Uterus (tissue), 4 donors: ENCODE measurements at regions of chr2 and their contacts with region 1.

Region 1: DNA sequence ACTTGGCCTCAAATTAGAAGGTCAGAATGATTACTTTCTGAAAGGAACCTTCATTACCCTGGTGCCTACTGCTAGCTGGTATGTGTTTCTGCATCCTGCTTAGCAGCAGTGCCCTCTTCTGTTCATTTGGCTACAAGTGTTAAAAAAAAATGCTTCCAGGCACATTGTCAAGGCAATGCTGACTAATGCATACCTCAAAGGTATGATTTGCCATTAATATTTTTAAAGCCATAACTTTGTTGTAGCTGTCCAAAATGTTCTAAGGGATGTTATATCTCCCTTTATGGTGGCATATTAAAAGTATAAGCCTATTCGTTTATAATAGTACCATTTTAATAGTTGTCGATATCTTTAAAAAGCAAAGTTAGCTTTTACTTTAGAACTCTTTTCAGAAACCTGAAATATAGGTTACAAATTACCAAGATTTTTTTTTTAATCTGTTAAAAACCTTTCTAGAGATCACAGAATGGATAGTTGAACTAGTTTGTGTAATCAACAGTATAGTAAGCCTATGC is 52.0 kb upstream of the FAM171B start:
- DNase-seq: peak in 1 of 2 donors; percentile 28
- H3K4me3 ChIP-seq: no peak overlapping the region
- H3K27ac ChIP-seq: no peak overlapping the region
- H3K4me1 ChIP-seq: no peaks in the 10 kb centered on the region
- H3K27me3 ChIP-seq: no peaks in the 10 kb centered on the region
- CTCF ChIP-seq: peak; percentile 74 to 83 (median 79)
- POLR2A ChIP-seq: no peak

Region 2: GRCh38 chr2:186493564-186494085 is 148.2 kb before region 1 on chr2:
- intact Hi-C with region 1: no loop called
- DNase-seq: no peak
- H3K4me3 ChIP-seq: no peak overlapping the region
- H3K27ac ChIP-seq: no peak overlapping the region
- H3K4me1 ChIP-seq: peaks cover 2 to 19% of the 10 kb centered on the region in 2 donors
- H3K27me3 ChIP-seq: no peaks in the 10 kb centered on the region
- CTCF ChIP-seq: no peak
- POLR2A ChIP-seq: no peak

Region 3: DNA sequence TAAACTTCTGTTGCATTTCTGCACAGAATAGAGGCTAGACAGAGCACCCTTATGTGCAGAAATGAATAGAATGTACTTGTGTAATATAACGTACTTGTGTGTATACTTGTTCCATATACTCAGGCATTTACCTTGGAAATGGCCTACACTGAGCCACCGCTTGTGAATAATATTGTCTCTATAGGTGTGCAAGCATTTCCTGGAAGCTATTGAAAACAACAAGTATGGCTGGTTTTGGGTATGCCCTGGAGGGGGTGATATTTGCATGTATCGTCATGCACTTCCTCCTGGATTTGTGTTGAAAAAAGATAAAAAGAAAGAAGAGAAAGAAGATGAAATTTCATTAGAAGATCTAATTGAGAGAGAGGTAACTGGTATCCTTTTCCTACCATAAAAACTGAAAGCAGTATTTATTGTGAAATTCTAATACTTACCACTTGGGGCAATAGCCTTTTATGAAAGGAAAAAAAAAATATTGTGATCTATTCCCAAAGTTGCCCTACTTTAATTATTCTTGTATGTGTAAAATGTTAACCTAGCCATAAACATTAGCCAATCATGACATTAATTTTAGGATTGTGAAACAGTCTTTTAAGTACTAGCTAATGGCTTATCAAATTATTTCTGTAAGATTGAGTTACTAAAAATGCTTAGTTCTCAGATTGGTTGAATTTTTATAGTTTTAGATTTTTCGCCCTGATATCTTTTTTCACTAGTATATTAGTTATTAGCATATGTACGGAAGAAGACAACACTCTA is 137.8 kb before region 1 on chr2:
- intact Hi-C with region 1: loop called (anchors 10 kb)
- DNase-seq: no peak
- H3K4me3 ChIP-seq: no peak overlapping the region
- H3K27ac ChIP-seq: no peak overlapping the region
- H3K4me1 ChIP-seq: peaks cover 0 to 6% of the 10 kb centered on the region in 2 donors
- H3K27me3 ChIP-seq: no peaks in the 10 kb centered on the region
- CTCF ChIP-seq: peak; percentile 39 to 71 (median 53)
- POLR2A ChIP-seq: no peak

Region 4: DNA sequence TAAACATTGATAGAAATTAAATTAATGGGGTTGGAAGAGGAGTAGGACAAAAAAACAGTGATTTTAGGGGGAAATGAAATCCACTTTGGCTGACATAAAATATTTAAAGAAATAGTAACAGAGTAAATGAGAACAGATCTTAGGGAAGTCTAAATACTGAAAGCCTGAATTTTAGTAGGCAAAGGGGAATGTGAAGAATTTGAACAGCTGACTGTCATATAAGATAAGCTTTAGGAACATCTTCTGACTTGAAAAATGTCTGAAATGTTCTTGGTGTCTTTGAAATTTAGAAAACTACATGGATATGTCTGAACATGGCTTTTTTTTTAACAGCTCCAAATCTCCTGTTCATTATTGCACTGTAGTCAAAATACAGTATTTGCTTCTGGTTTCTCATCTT is 655.9 kb after region 1 on chr2:
- intact Hi-C with region 1: no loop called
- DNase-seq: no peak
- H3K4me3 ChIP-seq: no peak overlapping the region
- H3K27ac ChIP-seq: peak overlapping the region in 1 of 2 donors; percentile 3
- H3K4me1 ChIP-seq: no peaks in the 10 kb centered on the region
- H3K27me3 ChIP-seq: no peaks in the 10 kb centered on the region
- CTCF ChIP-seq: no peak
- POLR2A ChIP-seq: no peak